Testis (tissue), 5 donors: ENCODE measurements at regions of chr11 and their contacts with region 1.

Region 1: DNA sequence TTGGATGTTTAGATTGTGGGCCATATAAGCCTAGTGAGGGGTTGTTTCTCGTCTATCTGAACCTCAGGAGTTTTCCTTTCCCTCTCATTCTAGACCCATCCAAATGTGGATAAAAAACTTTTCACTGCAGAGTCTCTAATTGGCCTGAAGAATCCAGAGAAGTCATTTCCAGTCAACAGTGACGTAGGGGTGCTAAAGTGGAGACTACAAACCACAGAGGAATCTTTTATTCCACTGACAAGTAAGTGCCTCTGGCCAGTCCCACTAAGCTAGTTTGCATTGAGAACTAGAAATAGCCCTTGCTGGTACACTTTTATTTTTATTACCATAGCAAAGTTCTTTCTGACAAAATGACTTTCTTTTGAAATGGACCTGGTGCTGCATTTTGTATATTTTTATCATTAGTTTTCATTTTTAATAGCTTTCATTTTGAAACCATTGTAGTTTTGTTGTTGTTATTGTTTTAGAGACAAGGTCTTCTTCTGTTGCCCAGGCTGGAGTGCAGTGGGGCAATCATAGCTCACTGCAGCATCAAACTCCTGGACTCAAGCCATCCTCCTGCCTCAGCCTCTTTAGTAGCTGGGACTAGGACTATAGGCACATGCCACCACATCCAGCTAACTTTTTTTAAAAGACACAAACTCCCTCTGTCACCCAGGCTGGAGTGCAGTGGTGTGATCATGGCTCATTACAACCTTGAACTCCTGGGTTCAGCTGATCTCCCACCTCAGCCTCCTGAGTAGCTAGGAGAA is 14.6 kb upstream of the PHLDB1 start:
- DNase-seq: no peak
- H3K4me3 ChIP-seq: no peak overlapping the region
- H3K27ac ChIP-seq: no peak overlapping the region
- H3K4me1 ChIP-seq: no peaks in the 10 kb centered on the region
- H3K27me3 ChIP-seq: no peaks in the 10 kb centered on the region
- CTCF ChIP-seq: no peak
- POLR2A ChIP-seq: no peak

Region 2: DNA sequence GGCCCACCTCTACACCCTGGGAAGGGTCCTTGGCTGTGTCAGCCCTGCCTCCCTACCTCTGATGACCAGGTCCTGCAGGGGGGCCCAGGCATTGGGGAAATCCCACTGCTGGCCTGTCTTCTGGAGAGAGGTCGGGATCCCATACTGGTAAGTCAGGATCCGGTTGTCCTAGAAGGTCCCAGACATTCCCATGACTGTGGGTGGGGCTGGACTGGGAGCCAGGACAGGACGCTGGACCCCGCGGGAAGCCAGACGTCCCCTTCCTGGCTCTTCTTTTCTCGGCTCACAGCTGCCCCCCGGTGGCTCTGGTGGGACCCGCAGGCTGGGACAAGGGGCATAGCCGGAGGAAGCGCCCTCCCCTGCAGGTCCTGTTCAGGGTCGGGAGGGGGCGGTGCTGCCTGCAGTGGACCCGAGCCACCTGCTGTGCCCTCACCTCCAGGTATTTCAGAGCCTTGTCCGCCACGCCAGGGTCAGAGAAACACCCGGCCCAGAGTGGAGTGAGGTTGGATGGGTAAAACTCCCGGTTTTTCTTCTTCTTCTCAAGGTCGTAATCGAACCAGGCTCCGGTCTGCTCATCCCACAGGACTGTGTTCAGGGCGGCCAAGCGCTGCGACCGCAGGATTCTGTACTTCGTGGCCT is 66.6 kb after region 1 on chr11:
- intact Hi-C with region 1: loop called (anchors 10 kb)
- DNase-seq: peak; percentile 93
- H3K4me3 ChIP-seq: no peak overlapping the region
- H3K27ac ChIP-seq: peak overlapping the region in 1 of 2 donors; percentile 42
- H3K4me1 ChIP-seq: no peaks in the 10 kb centered on the region
- H3K27me3 ChIP-seq: no peaks in the 10 kb centered on the region
- CTCF ChIP-seq: peak; percentile 82 to 96 (median 89)
- POLR2A ChIP-seq: no peak

Region 3: DNA sequence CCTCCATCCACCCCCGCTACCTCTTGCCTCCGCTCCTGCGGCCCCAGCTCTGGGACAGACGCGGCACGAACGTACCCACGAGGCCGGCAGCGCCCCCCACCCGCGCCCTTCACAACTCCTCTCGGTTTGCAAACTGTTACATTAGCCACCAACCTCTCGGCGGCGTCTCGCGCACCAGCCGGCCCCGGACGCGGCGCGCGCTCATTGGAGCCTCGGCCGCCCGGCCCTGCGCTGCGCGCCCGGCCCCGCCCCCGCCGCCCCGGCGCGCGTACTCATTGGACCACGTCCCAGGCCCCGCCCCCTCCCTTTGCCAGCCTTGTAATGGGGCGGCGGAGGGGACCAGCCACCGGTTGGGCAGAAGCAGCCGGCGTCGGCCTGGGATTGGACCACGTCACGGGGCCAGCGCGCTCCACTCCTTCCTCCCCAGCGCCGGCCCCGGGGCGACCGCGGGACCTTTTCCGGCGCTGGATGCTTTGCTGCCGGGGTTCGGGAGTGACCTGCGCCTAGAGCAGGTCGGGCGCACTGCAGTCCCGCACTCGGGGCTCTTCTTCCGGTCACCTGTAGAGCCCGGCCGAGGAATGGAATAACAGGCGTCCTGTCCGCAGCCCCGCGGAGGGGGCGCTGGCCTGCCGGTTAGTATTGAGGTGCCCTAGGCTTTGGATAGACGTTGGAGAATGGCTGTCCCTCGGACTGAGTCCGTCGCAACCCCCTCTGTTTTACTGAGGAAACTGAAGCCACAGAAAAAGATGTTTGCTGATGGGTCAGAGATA is 464.4 kb after region 1 on chr11 and contains the start of gene HYOU1:
- intact Hi-C with region 1: no loop called
- DNase-seq: peak; percentile 98
- H3K4me3 ChIP-seq: peak within 1 kb of the TSS; percentile 90 to 96
- H3K27ac ChIP-seq: peak within 1 kb of the TSS; percentile 77 to 83
- H3K4me1 ChIP-seq: peaks cover 12% of the 10 kb centered on the region
- H3K27me3 ChIP-seq: no peaks in the 10 kb centered on the region
- CTCF ChIP-seq: peak in 1 of 3 experiments; percentile 10
- POLR2A ChIP-seq: peak; percentile 41
- total RNA-seq, gene HYOU1: 126 to 127 TPM